Activated T-helper 1 cell treated with anti-CD3 and anti-CD28 coated beads, Interleukin-12 subunit alpha, Interleukin-12 subunit beta, Interleukin-2, Interleukin-4 antibody, amounts not matched to agents 30 ng/mL and 10 ng/mL and 1 ng/mL, durations not matched to agents 14 hours and 24 hours and 36 hours (primary cell): ENCODE measurements at regions of chr3 and their contacts with region 1.

Region 1: DNA sequence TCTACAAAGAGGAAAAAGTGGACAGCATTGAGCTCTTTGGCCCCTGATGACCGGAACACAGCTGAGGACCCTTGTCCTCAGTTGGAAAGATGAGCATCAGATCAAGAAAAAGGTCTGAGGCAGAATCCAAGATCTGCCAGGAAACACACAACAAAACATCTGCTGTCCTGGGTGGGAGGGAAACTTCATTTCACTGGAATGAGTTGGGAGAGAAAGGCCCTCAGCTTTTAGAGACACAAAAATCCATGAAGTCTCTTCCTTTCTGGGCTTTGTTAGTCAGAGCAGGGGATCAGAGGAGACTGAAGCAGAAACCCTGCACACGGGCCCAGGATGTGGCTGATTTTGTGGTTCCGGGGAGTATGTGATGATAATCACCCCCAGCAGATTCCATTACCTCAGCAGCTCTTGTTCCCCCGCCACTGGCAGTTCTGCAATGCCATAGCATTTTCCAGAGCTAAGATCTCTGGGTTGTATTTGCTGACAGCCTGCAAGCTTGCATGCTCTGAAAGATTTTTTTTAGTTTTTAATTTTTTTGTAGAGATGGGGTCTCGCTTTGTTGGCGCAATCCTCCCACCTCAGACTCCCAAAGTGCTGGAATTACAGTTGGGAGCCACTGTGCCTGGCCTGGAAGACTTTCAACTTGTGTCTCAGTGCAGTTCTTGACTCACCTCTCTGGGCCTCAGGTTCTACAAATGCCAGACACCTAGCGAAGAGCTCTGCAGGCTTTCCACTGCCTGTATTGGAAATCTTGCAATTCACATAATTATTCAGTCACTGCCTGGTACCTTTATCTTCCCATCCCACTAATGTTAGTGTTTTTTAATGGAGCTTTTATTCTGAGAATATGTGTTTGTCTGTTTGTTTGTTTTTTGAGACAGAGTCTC is 5.8 kb upstream of the TATDN2 start:
- DNase-seq: peak; percentile 81
- H3K4me3 Mint-ChIP-seq: peak overlapping the region; percentile 68
- H3K27ac Mint-ChIP-seq: peak overlapping the region; percentile 98
- H3K4me1 Mint-ChIP-seq: peaks cover 57% of the 10 kb centered on the region
- H3K27me3 Mint-ChIP-seq: no peaks in the 10 kb centered on the region

Region 2: DNA sequence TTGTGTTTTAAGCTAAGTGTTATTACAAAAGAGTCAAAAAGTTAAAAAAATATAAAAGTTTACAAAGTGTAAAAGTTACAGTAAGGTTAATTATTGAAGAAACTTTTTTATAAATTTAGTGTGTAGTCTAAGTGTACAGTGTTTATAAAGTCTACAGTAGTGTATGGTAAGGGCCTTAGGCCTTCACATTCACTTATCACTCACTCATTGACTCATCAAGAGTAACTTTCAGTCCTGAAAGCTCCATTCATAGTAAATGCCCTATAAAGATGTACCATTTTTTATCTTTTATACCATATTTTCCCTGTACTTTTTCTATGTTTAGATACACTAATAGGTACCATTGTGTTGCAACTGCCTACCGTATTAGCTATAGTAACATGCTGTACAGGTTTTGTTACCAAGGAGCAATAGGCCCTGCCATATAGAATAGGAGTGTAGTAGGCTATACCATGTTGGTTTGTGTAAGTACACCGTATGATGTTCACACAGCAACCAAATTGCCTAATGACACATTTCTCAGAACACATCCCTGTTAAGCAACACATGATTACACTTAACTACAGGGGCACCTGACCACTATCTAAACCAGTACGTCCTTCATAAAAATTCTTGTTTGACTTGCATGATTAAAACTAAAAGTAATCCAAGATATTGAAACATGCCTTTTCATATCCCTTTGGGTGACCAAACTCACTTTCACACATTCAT is 1296.4 kb before region 1 on chr3:
- intact Hi-C with region 1: no loop called
- DNase-seq: no peak
- H3K4me3 Mint-ChIP-seq: no peak overlapping the region
- H3K27ac Mint-ChIP-seq: no peak overlapping the region
- H3K4me1 Mint-ChIP-seq: peaks cover 6% of the 10 kb centered on the region
- H3K27me3 Mint-ChIP-seq: no peaks in the 10 kb centered on the region

Region 3: GRCh38 chr3:10164546-10165393 is 77.7 kb before region 1 on chr3 and contains the start of gene IRAK2:
- intact Hi-C with region 1: loop called (anchors 1 kb)
- DNase-seq: peak; percentile 51
- H3K4me3 Mint-ChIP-seq: peak within 1 kb of the TSS; percentile 82
- H3K27ac Mint-ChIP-seq: peak within 1 kb of the TSS; percentile 44
- H3K4me1 Mint-ChIP-seq: peaks cover 35% of the 10 kb centered on the region
- H3K27me3 Mint-ChIP-seq: no peaks in the 10 kb centered on the region
- total RNA-seq, gene IRAK2: 8.1 and 8.6 TPM in 2 replicates

Region 4: GRCh38 chr3:10192953-10193691 is 49.3 kb before region 1 on chr3:
- intact Hi-C with region 1: loop called (anchors 1 kb)
- DNase-seq: no peak
- H3K4me3 Mint-ChIP-seq: peak overlapping the region; percentile 63
- H3K27ac Mint-ChIP-seq: peak overlapping the region; percentile 82
- H3K4me1 Mint-ChIP-seq: peaks cover 75% of the 10 kb centered on the region
- H3K27me3 Mint-ChIP-seq: no peaks in the 10 kb centered on the region

Region 5: GRCh38 chr3:10198761-10199649 is 43.4 kb before region 1 on chr3:
- intact Hi-C with region 1: loop called (anchors 2 kb)
- DNase-seq: peak; percentile 78
- H3K4me3 Mint-ChIP-seq: peak overlapping the region; percentile 47
- H3K27ac Mint-ChIP-seq: peak overlapping the region; percentile 90
- H3K4me1 Mint-ChIP-seq: peaks cover 78% of the 10 kb centered on the region
- H3K27me3 Mint-ChIP-seq: no peaks in the 10 kb centered on the region